Right ventricle myocardium inferior (tissue), 1 donor: ENCODE measurements at regions of chr1 and their contacts with region 1.

Region 1: DNA sequence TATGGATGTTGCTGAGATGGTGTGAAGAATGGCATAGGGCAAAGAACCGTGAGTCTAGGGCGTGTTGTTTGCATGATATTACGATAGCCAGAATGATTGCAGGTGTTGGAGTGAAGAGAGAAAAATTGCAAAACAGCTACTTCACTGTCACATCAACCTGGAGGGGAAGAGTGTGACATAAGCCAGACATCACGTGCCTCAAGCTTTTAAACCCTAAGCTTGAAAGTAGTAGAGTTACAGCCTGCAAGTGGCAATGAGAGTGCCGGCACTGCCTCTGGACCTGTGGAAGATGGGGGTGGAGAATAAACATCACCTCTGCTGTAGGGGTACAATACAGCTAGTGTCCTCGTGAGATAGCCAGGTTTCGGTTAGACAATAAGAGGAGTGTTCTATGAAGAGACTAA is 11.1 kb downstream of the EEIG2 start:
- DNase-seq: no peak
- ATAC-seq: no peak

Region 2: DNA sequence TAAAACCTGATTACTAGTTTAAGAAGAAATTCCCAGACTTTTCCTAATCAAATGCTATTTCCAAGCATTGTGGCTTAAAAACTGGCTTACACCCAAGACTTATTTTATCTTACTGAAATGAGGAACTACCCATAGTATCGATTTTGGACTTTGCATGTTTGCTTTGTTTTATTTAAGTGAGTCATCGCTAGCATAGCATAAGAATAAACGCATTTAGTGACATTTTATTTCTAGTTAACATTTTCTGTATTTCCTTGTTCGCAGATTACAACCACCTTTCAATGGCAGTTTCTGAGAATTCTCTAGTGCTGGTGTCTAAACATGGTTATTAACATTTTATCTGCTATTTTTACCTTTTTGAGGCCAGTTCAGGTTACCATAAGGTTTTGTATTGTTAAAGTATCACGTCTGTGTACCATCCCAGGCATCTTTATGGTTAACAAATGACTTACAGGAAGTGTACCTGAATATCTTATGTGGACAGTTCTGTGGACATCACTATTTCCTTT is 13.4 kb after region 1 on chr1:
- intact Hi-C with region 1: loop called (anchors 1 kb)
- DNase-seq: no peak
- ATAC-seq: no peak